ENCODE measurements at regions of chr5 and their contacts with region 1.

Region 1: DNA sequence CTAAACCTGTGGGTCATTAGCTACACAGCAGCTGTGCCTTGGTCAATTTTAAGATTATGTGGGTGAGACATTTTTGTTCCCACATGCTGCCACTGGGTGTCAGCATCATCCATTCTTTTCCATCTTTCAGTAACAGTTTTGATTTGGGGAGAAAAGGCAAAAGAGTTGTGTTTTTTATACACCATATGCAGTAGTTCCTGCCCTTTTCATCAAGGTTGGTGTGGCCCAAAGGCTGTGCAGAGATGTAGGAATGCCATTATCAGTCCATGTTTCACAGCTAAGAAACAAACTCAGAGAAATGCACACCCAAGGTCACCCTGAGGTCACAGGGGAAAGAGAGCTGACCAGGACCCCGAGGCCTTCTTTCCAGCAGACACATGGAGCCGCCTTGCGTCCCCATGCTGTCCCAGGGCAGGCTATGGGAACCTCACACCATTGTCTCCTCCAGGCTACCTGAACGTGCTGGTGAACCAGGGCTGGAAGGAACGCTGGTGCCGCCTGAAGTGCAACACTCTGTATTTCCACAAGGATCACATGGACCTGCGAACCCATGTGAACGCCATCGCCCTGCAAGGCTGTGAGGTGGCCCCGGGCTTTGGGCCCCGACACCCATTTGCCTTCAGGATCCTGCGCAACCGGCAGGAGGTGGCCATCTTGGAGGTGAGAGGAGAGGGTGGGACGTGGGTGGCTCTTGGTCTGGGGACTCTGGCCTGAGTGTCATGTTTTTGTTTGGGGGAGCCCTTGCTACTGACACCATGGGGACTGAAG is 27.8 kb upstream of the GRPEL2 start:
- DNase-seq: peak in 2 of 10 donors; percentile 17 to 38
- H3K4me3 ChIP-seq: no peak overlapping the region
- H3K27ac ChIP-seq: peak overlapping the region in 2 of 59 donors; percentile 31 to 71
- H3K27me3 ChIP-seq: no peaks in the 10 kb centered on the region
- CTCF ChIP-seq: peak; percentile 58 to 92 (median 78)

Region 2: GRCh38 chr5:149240354-149240998 is 77.0 kb before region 1 on chr5:
- intact Hi-C with region 1: no loop called
- DNase-seq: no peak
- H3K4me3 ChIP-seq: no peak overlapping the region
- H3K27ac ChIP-seq: no peak overlapping the region
- H3K27me3 ChIP-seq: no peaks in the 10 kb centered on the region
- CTCF ChIP-seq: no peak

Region 3: DNA sequence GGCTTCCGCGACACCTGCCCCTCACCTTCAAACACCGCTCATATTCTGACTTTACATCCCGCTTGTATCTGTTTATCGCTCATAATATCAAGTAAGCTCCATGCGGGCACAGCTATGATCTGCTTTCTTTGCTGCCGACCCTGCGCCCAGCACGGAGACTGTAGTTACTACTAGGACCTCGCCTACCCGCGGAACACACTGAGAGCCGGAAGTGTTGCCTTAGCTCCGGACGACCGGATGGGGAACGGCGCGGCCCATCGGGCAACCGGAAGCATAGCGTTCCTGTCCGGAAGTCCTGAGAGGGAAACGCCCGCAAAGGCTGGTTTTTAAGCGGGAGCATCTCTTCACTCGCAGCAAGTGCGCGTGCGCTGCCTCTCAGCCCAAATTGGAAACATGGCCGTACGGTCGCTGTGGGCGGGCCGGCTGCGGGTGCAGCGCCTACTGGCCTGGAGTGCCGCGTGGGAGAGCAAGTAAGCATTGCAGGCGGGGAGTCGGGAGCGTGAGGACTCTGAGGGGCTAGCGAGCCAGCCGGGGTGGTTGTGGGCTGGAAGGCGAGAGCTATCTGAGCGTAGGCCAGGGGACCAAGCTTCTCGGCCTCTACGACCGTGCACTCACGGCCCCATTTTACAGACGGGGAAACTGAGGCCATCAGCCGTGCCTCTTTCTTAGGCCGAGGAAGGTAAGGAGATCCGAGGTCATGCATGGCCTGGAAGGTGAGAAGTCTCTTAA is 27.8 kb after region 1 on chr5 and contains the start of gene GRPEL2:
- intact Hi-C with region 1: loop called in 1 of 2 experiments (anchors 2 kb)
- DNase-seq: peak; percentile 92 to 97 (median 96)
- H3K4me3 ChIP-seq: peak within 1 kb of the TSS; percentile 64 to 98 (median 89)
- H3K27ac ChIP-seq: peak within 1 kb of the TSS; percentile 6 to 94 (median 84)
- H3K27me3 ChIP-seq: peaks cover 0 to 16% (median 0%) of the 10 kb centered on the region in 45 donors
- CTCF ChIP-seq: peak in 41 of 56 donors; percentile 2 to 61 (median 33)
- total RNA-seq, gene GRPEL2: 9.0 to 25.3 (median 17.3) TPM

Region 4: GRCh38 chr5:149367249-149367971 is 49.9 kb after region 1 on chr5:
- intact Hi-C with region 1: loop called (anchors 2 to 5 kb)
- DNase-seq: peak in 5 of 10 donors; percentile 38 to 62 (median 52)
- H3K4me3 ChIP-seq: no peak overlapping the region
- H3K27ac ChIP-seq: peak overlapping the region in 2 of 59 donors; percentile 12 to 20
- H3K27me3 ChIP-seq: no peaks in the 10 kb centered on the region
- CTCF ChIP-seq: peak; percentile 47 to 81 (median 70)

Region 5: DNA sequence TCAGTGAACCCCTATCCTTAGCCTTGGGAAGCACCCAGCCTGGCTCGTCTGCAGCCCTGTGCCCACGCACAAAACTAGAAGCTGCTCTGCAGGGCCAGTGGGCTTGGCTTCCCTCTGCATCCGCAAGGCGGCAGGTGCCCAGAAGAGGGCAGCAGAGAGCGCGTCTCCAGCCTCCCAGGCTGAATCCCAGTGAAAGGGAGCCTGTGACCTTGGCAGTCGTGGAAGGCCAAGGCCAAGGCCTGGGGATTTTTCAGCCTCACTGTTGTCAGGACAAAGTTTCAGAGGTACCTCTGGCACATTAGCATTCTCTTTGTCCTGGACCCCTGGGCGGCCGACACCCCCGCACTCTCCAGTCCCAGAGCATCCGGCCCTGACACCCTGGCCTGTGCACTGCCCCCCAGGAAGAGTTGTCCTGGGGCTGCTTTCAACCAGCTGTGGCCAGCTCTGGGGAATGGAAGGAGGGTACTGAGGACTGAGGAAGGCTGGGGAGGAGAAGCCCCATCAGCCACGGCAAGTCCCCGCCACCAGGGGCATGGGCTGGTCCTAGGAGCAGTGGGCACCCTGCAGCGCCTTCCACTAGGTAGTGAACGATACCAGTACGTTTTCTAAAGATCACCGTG is 125.2 kb after region 1 on chr5:
- intact Hi-C with region 1: loop called in 1 of 2 experiments (anchors 5 kb)
- DNase-seq: peak; percentile 54 to 87 (median 79)
- H3K4me3 ChIP-seq: no peak overlapping the region
- H3K27ac ChIP-seq: peak overlapping the region in 22 of 59 donors; percentile 11 to 78 (median 30)
- H3K27me3 ChIP-seq: no peaks in the 10 kb centered on the region
- CTCF ChIP-seq: peak; percentile 61 to 98 (median 90)

Region 6: GRCh38 chr5:149561848-149562247 is 244.4 kb after region 1 on chr5:
- intact Hi-C with region 1: loop called in 1 of 2 experiments (anchors 5 kb)
- DNase-seq: no peak
- H3K4me3 ChIP-seq: peak overlapping the region in 1 of 59 donors; percentile 10
- H3K27ac ChIP-seq: peak overlapping the region in 30 of 59 donors; percentile 0 to 78 (median 48)
- H3K27me3 ChIP-seq: no peaks in the 10 kb centered on the region
- CTCF ChIP-seq: no peak

Measured in dorsolateral prefrontal cortex (tissue), 120 donors.